ENCODE measurements at regions of chr6 and their contacts with region 1.

Region 1: GRCh38 chr6:116570856-116571682 is at the start of gene RWDD1:
- DNase-seq: peak; percentile 99
- H3K4me3 Mint-ChIP-seq: peak within 1 kb of the TSS; percentile 97
- H3K27ac Mint-ChIP-seq: peak within 1 kb of the TSS; percentile 93
- H3K4me1 Mint-ChIP-seq: peaks cover 49% of the 10 kb centered on the region
- H3K27me3 Mint-ChIP-seq: no peaks in the 10 kb centered on the region
- total RNA-seq, gene RWDD1: 46.7 to 49.1 TPM

Region 2: GRCh38 chr6:116010790-116011401 is 560.2 kb before region 1 on chr6:
- CTCF ChIA-PET with region 1: no interaction called
- POLR2A ChIA-PET with region 1: no interaction called
- intact Hi-C with region 1: loop called (anchors 1 kb)
- DNase-seq: peak; percentile 65
- H3K4me3 Mint-ChIP-seq: no peak overlapping the region
- H3K27ac Mint-ChIP-seq: no peak overlapping the region
- H3K4me1 Mint-ChIP-seq: peaks cover 13% of the 10 kb centered on the region
- H3K27me3 Mint-ChIP-seq: peaks cover 7% of the 10 kb centered on the region

Region 3: DNA sequence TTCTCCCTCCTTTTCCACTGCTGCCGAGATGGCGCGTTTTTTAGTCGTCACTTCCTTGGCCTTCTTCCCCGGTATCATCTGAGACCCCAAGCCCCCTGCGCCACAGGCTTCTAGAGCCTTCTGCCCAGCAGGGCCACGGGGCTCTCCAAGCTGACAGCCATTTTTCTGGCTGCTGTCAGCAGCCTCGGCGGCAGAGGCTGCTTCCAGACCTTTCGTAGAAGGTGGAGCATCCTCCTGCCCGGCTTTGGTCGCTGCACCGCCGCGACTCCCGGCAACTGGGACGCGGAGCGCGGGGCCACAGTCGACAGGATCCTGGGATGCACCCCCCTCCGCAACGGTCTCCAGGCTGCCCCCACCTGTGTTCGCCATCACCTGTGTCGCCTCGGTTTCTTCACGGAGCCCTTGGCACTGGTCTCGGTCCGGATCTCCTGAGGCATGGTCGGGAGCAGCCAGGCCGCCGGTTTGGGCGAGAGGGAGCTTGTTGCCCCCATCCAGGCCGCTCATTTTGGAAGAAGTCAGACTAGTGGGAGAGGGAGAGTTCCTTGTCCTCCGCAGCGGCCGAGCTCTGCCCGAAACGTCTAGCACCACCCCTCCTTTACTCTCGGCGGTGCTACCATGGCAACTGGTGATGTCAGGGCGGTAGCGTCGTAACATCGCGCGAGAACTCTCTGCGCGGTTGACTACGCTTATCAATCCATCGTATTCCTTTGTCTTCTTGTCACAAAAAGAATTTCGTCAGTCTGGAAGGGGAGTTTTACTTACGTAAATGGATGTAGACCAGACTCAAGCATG is 317.4 kb before region 1 on chr6 and contains the start of gene TSPYL4:
- CTCF ChIA-PET with region 1: no interaction called
- POLR2A ChIA-PET with region 1: interaction called, 3 read pairs
- intact Hi-C with region 1: loop called (anchors 1 kb)
- DNase-seq: peak; percentile 95
- H3K4me3 Mint-ChIP-seq: no peak within 1 kb of the TSS
- H3K27ac Mint-ChIP-seq: no peak within 1 kb of the TSS
- H3K4me1 Mint-ChIP-seq: peaks cover 8% of the 10 kb centered on the region
- H3K27me3 Mint-ChIP-seq: no peaks in the 10 kb centered on the region
- total RNA-seq, gene TSPYL4: 10.5 to 11.1 TPM

Region 4: GRCh38 chr6:116287689-116288282 is 283.3 kb before region 1 on chr6:
- CTCF ChIA-PET with region 1: interaction called, 10 read pairs
- POLR2A ChIA-PET with region 1: no interaction called
- intact Hi-C with region 1: no loop called
- DNase-seq: no peak
- H3K4me3 Mint-ChIP-seq: no peak overlapping the region
- H3K27ac Mint-ChIP-seq: no peak overlapping the region
- H3K4me1 Mint-ChIP-seq: no peaks in the 10 kb centered on the region
- H3K27me3 Mint-ChIP-seq: no peaks in the 10 kb centered on the region

Region 5: GRCh38 chr6:116531675-116532570 is 39.1 kb before region 1 on chr6:
- CTCF ChIA-PET with region 1: interaction called, 20 read pairs
- POLR2A ChIA-PET with region 1: no interaction called
- intact Hi-C with region 1: no loop called
- DNase-seq: peak; percentile 64
- H3K4me3 Mint-ChIP-seq: no peak overlapping the region
- H3K27ac Mint-ChIP-seq: no peak overlapping the region
- H3K4me1 Mint-ChIP-seq: no peaks in the 10 kb centered on the region
- H3K27me3 Mint-ChIP-seq: peaks cover 12% of the 10 kb centered on the region

Region 6: GRCh38 chr6:116667623-116668022 is 96.6 kb after region 1 on chr6:
- CTCF ChIA-PET with region 1: no interaction called
- POLR2A ChIA-PET with region 1: interaction called, 6 read pairs
- intact Hi-C with region 1: loop called (anchors 1 kb)
- DNase-seq: no peak
- H3K4me3 Mint-ChIP-seq: peak overlapping the region; percentile 98
- H3K27ac Mint-ChIP-seq: peak overlapping the region; percentile 95
- H3K4me1 Mint-ChIP-seq: peaks cover 35% of the 10 kb centered on the region
- H3K27me3 Mint-ChIP-seq: peaks cover 3% of the 10 kb centered on the region

Region 7: GRCh38 chr6:116847227-116847626 is 276.2 kb after region 1 on chr6:
- CTCF ChIA-PET with region 1: no interaction called
- POLR2A ChIA-PET with region 1: no interaction called
- intact Hi-C with region 1: loop called (anchors 10 kb)
- DNase-seq: no peak
- H3K4me3 Mint-ChIP-seq: no peak overlapping the region
- H3K27ac Mint-ChIP-seq: no peak overlapping the region
- H3K4me1 Mint-ChIP-seq: no peaks in the 10 kb centered on the region
- H3K27me3 Mint-ChIP-seq: peaks cover 1% of the 10 kb centered on the region

Measured in activated CD4-positive, alpha-beta memory T cell treated with anti-CD3 and anti-CD28 coated beads for 36 hours (primary cell).